ENCODE measurements at regions of chr20 and their contacts with region 1.

Region 1: DNA sequence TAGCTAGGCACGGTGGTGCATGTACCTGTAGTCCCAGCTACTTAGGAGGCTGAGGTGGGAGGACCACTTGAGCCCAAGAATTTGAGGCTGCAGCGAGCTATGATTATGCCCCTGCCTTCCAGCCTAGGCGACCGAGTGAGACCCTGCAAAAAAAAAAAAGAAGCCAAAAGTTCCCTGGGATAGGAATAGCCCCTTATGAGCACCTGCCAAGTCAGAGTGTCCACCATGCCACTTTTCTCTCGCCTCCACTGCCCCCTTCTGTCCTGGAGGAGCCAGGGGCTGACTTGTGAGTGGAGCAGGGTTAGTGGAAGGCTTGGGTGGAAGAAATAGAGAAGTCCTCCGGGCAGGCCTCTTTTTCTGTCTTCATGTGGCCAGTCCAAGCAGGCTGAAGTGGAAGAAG is 12.1 kb upstream of the DDX27 start:
- DNase-seq: no peak
- ATAC-seq: no peak
- H3K4me3 ChIP-seq: no peak overlapping the region
- H3K4me3 Mint-ChIP-seq: no peak overlapping the region
- H3K27ac ChIP-seq: no peak overlapping the region
- H3K27ac Mint-ChIP-seq: no peak overlapping the region
- H3K4me1 ChIP-seq: no peaks in the 10 kb centered on the region
- H3K4me1 Mint-ChIP-seq: no peaks in the 10 kb centered on the region
- H3K27me3 ChIP-seq: no peaks in the 10 kb centered on the region
- H3K27me3 Mint-ChIP-seq: no peaks in the 10 kb centered on the region

Region 2: GRCh38 chr20:48783533-48784272 is 423.4 kb before region 1 on chr20:
- CTCF ChIA-PET with region 1: interaction called in 1 of 2 experiments, 17 read pairs
- POLR2A ChIA-PET with region 1: no interaction called
- DNase-seq: peak in 25 of 35 experiments; percentile 26 to 72 (median 44)
- ATAC-seq: peak; percentile 31 to 79 (median 34)
- H3K4me3 ChIP-seq: no peak overlapping the region
- H3K4me3 Mint-ChIP-seq: no peak overlapping the region
- H3K27ac ChIP-seq: peak overlapping the region; percentile 75
- H3K27ac Mint-ChIP-seq: no peak overlapping the region
- H3K4me1 ChIP-seq: peaks cover 0 to 72% of the 10 kb centered on the region in 2 experiments
- H3K4me1 Mint-ChIP-seq: peaks cover 19 to 41% (median 21%) of the 10 kb centered on the region in 3 donors
- H3K27me3 ChIP-seq: no peaks in the 10 kb centered on the region
- H3K27me3 Mint-ChIP-seq: no peaks in the 10 kb centered on the region

Region 3: GRCh38 chr20:49148601-49149000 is 58.5 kb before region 1 on chr20:
- CTCF ChIA-PET with region 1: no interaction called
- POLR2A ChIA-PET with region 1: interaction called in 1 of 2 experiments, 11 read pairs
- DNase-seq: no peak
- ATAC-seq: no peak
- H3K4me3 ChIP-seq: no peak overlapping the region
- H3K4me3 Mint-ChIP-seq: no peak overlapping the region
- H3K27ac ChIP-seq: no peak overlapping the region
- H3K27ac Mint-ChIP-seq: no peak overlapping the region
- H3K4me1 ChIP-seq: no peaks in the 10 kb centered on the region
- H3K4me1 Mint-ChIP-seq: peaks cover 21 to 23% (median 22%) of the 10 kb centered on the region in 3 donors
- H3K27me3 ChIP-seq: no peaks in the 10 kb centered on the region
- H3K27me3 Mint-ChIP-seq: no peaks in the 10 kb centered on the region

Region 4: DNA sequence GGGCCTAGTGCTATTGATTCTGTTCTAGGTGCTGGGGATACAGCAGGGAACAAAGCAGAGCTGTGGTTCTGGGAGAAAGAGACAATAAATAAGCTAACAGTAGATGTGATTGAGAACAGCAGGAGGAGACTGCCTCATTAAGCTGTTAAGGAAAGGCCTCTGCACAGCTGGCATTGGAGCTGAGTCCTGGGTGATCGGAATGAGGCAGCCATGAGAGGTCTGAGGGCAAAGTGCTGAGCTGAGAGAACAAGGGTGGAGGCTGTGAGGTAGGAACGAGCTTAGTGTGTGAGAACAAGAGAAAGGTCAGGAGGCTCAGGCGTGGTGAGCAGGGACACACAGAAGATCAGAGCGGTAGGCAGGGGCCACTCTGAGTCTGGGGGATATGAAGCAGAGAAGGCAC is 30.5 kb after region 1 on chr20:
- CTCF ChIA-PET with region 1: no interaction called
- POLR2A ChIA-PET with region 1: no interaction called
- DNase-seq: no peak
- ATAC-seq: no peak
- H3K4me3 ChIP-seq: no peak overlapping the region
- H3K4me3 Mint-ChIP-seq: no peak overlapping the region
- H3K27ac ChIP-seq: no peak overlapping the region
- H3K27ac Mint-ChIP-seq: peak overlapping the region; percentile 7 to 47
- H3K4me1 ChIP-seq: no peaks in the 10 kb centered on the region
- H3K4me1 Mint-ChIP-seq: no peaks in the 10 kb centered on the region
- H3K27me3 ChIP-seq: no peaks in the 10 kb centered on the region
- H3K27me3 Mint-ChIP-seq: no peaks in the 10 kb centered on the region

Region 5: DNA sequence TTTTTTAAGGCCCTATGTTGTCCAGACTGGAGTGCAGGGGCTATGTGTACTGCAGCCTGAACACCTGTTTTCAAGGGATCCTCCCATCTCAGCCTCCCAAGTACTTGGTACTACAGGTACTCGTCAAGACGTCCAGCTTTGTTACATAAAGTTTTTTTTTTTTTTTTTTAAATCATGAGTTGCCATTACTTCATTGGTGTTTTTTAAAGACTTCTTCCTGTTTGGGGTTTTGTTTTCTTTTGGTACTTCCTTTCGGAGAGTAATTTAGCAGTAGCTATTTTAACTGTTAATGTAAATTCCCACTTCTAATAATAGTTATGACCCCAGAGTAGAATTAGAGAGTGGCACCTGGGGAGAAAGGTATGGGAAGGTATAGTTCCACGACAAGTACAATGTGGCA is 60.3 kb after region 1 on chr20:
- CTCF ChIA-PET with region 1: no interaction called
- POLR2A ChIA-PET with region 1: no interaction called
- DNase-seq: peak in 1 of 35 experiments; percentile 23
- ATAC-seq: peak; percentile 32 to 54 (median 45)
- H3K4me3 ChIP-seq: peak overlapping the region in 1 of 2 donors; percentile 27
- H3K4me3 Mint-ChIP-seq: peak overlapping the region; percentile 72 to 83 (median 78)
- H3K27ac ChIP-seq: peak overlapping the region; percentile 61
- H3K27ac Mint-ChIP-seq: peak overlapping the region; percentile 88 to 89
- H3K4me1 ChIP-seq: peaks cover 2 to 30% of the 10 kb centered on the region in 2 experiments
- H3K4me1 Mint-ChIP-seq: peaks cover 61 to 69% (median 69%) of the 10 kb centered on the region in 3 donors
- H3K27me3 ChIP-seq: no peaks in the 10 kb centered on the region
- H3K27me3 Mint-ChIP-seq: no peaks in the 10 kb centered on the region

Region 6: DNA sequence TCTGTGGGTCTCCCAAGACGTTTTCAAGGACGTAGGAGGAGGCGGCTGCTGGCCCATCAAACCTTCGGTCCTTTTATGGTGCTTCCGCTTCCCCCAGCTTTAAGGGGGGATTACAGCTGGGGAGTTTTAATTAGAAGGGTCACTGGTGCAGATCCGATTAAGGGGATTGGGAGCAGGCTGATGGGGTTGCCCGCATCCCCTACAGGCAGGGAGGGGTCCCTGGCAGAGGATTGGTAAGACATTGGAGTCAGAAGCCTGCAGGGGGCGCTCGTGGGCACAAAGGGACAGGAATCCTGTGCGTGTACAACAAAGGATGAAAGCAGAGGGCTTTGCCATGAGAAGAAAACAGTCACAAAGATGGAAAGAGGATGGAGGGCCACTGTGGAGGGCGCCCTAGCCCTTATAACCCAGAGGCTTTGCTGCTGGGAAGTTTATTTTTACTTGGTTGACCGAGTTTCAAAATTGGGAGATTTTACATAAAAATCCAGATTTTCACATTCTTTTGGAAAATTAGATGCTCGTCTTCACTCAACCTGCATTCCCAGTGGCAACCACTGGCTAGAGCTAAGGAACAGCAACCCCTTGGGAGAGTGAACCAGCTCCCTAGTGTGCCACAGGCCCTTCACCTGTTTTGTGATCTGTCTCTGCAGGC is 177.5 kb after region 1 on chr20:
- CTCF ChIA-PET with region 1: no interaction called
- POLR2A ChIA-PET with region 1: interaction called in 1 of 2 experiments, 12 read pairs
- DNase-seq: peak in 33 of 35 experiments; percentile 3 to 66 (median 39)
- ATAC-seq: peak in 1 of 4 experiments; percentile 35
- H3K4me3 ChIP-seq: no peak overlapping the region
- H3K4me3 Mint-ChIP-seq: no peak overlapping the region
- H3K27ac ChIP-seq: no peak overlapping the region
- H3K27ac Mint-ChIP-seq: peak overlapping the region in 1 of 2 donors; percentile 33
- H3K4me1 ChIP-seq: peaks cover 0 to 2% of the 10 kb centered on the region in 2 experiments
- H3K4me1 Mint-ChIP-seq: no peaks in the 10 kb centered on the region
- H3K27me3 ChIP-seq: peaks cover 0 to 48% of the 10 kb centered on the region in 2 experiments
- H3K27me3 Mint-ChIP-seq: peaks cover 48 to 52% of the 10 kb centered on the region in 2 donors

Measured in T-cell (primary cell).